Pancreas (tissue), 10 donors: ENCODE measurements at regions of chr5 and their contacts with region 1.

Region 1: GRCh38 chr5:39024005-39024404 is 50.2 kb downstream of the RICTOR start:
- DNase-seq: peak in 1 of 6 donors; percentile 16
- ATAC-seq: peak in 1 of 4 donors; percentile 32
- H3K4me3 ChIP-seq: no peak overlapping the region
- H3K27ac ChIP-seq: no peak overlapping the region
- H3K4me1 ChIP-seq: no peaks in the 10 kb centered on the region
- H3K27me3 ChIP-seq: no peaks in the 10 kb centered on the region
- CTCF ChIP-seq: no peak

Region 2: GRCh38 chr5:39074016-39074886 is 50.2 kb after region 1 on chr5 and contains the start of gene RICTOR:
- intact Hi-C with region 1: loop called in 1 of 3 experiments (anchors 10 kb)
- DNase-seq: peak; percentile 84 to 96 (median 90)
- ATAC-seq: peak; percentile 88 to 94 (median 94)
- H3K4me3 ChIP-seq: peak within 1 kb of the TSS; percentile 77 to 94 (median 90)
- H3K27ac ChIP-seq: peak within 1 kb of the TSS; percentile 92 to 99 (median 98)
- H3K4me1 ChIP-seq: peaks cover 9 to 15% (median 14%) of the 10 kb centered on the region in 3 donors
- H3K27me3 ChIP-seq: no peaks in the 10 kb centered on the region
- CTCF ChIP-seq: no peak
- total RNA-seq, gene RICTOR: 13.1 to 23.0 (median 15.3) TPM